PC-3 (cell line): ENCODE measurements at regions of chr5 and their contacts with region 1.

Region 1: DNA sequence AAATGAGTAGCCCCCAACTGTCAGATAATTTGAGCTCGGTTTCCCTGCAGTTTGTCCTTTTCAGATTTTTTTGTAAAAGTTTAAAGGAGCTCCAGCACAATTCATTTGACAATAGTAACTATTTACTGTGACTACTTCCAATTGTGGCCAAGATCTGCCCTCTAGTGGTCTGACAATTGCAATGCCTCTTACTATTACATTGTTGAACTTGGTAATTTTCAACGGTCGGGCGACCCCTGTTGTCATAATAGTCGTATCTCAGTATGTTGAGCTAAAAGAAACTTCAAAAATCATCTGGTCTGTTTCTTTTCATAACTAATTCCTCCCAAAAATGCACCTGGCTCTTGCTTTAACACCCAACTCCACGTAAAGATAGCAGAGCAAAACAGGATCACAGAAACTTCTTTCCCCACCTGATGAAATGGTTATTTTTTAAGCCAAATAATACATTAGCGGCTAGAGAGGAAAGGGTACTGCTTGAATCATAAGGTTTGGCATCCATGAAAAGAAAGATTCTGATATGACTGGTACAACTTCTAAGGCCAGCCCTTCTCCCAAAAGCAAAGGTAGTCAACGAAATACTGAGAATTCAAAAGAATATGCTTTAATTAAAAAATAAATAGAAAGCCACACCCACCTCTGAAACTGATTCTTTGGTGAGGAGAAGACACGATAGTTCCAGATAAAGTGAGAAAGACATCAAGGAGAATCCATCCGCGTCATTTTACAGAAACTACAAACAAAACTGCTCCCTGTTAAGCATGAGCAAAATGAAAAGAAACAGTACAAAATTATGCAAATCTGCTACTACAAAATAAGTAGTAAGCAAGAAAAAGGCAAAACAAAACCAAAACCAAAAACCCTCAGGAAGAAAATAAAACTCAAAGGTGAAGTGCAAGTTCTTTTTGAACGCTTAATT is 76.9 kb upstream of the HTR4 start:
- DNase-seq: peak; percentile 98
- ATAC-seq: peak; percentile 78
- H3K4me3 ChIP-seq: peak overlapping the region; percentile 65
- H3K27ac ChIP-seq: no peak overlapping the region
- H3K4me1 ChIP-seq: peaks cover 54% of the 10 kb centered on the region
- H3K27me3 ChIP-seq: no peaks in the 10 kb centered on the region
- CTCF ChIP-seq: peak; percentile 100

Region 2: GRCh38 chr5:147586832-147587231 is 1144.4 kb before region 1 on chr5:
- CTCF ChIA-PET with region 1: no interaction called
- POLR2A ChIA-PET with region 1: no interaction called
- intact Hi-C with region 1: no loop called
- DNase-seq: no peak
- ATAC-seq: no peak
- H3K4me3 ChIP-seq: no peak overlapping the region
- H3K27ac ChIP-seq: no peak overlapping the region
- H3K4me1 ChIP-seq: no peaks in the 10 kb centered on the region
- H3K27me3 ChIP-seq: 0 out of 2 replicates have a peak, but pooled peaks cover 7% of the 10 kb centered on the region
- CTCF ChIP-seq: no peak

Region 3: GRCh38 chr5:148443998-148444397 is 287.2 kb before region 1 on chr5:
- CTCF ChIA-PET with region 1: interaction called, 57 read pairs
- POLR2A ChIA-PET with region 1: interaction called, 4 read pairs
- intact Hi-C with region 1: loop called (anchors 1 kb)
- DNase-seq: peak; percentile 91
- ATAC-seq: peak; percentile 93
- H3K4me3 ChIP-seq: no peak overlapping the region
- H3K27ac ChIP-seq: no peak overlapping the region
- H3K4me1 ChIP-seq: no peaks in the 10 kb centered on the region
- H3K27me3 ChIP-seq: no peaks in the 10 kb centered on the region
- CTCF ChIP-seq: peak; percentile 97

Region 4: GRCh38 chr5:148523139-148523538 is 208.1 kb before region 1 on chr5:
- CTCF ChIA-PET with region 1: interaction called, 8 read pairs
- POLR2A ChIA-PET with region 1: no interaction called
- intact Hi-C with region 1: loop called (anchors 1 kb)
- DNase-seq: peak; percentile 44
- ATAC-seq: peak; percentile 86
- H3K4me3 ChIP-seq: no peak overlapping the region
- H3K27ac ChIP-seq: no peak overlapping the region
- H3K4me1 ChIP-seq: no peaks in the 10 kb centered on the region
- H3K27me3 ChIP-seq: peaks cover 83% of the 10 kb centered on the region
- CTCF ChIP-seq: peak; percentile 59

Region 5: GRCh38 chr5:148826053-148826738 is 95.0 kb after region 1 on chr5 and contains the start of gene ADRB2:
- CTCF ChIA-PET with region 1: interaction called, 20 read pairs
- POLR2A ChIA-PET with region 1: interaction called, 3 read pairs
- intact Hi-C with region 1: no loop called
- DNase-seq: peak; percentile 100
- ATAC-seq: peak; percentile 83
- H3K4me3 ChIP-seq: peak within 1 kb of the TSS; percentile 73
- H3K27ac ChIP-seq: peak within 1 kb of the TSS; percentile 69
- H3K4me1 ChIP-seq: peaks cover 51% of the 10 kb centered on the region
- H3K27me3 ChIP-seq: no peaks in the 10 kb centered on the region
- CTCF ChIP-seq: no peak
- total RNA-seq, gene ADRB2: 41.1 and 42.1 TPM in 2 replicates

Region 6: DNA sequence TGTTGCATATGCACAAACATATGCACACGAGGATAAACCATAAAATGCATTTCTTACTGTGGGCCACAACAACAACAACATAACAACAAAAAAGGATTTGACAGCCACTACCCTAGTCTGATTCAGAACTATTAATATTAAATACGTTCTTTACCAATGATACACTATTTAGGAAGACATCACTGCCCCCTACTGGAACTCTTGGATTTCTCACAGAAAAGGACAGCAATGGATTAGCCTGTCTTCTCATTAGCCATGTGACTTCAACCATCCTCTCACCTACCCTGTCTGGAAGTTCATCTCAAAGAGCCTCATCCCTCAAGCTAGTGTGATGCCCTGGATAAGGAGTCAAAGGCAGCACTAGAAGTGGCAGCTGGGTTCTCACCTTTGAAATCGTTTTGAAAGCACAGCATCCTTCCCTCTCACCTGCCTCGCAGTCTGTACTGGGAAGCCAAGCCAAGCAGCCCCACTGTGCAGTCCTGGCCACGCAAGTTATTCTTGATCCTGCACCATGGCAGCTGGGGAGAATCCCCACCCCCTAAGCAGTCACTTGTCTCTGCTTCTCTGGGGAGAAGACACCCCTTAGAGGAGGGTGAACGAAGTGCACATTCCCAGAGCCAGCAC is 267.1 kb after region 1 on chr5:
- CTCF ChIA-PET with region 1: interaction called, 17 read pairs
- POLR2A ChIA-PET with region 1: no interaction called
- intact Hi-C with region 1: loop called (anchors 1 kb)
- DNase-seq: peak; percentile 99
- ATAC-seq: peak; percentile 27
- H3K4me3 ChIP-seq: no peak overlapping the region
- H3K27ac ChIP-seq: no peak overlapping the region
- H3K4me1 ChIP-seq: peaks cover 73% of the 10 kb centered on the region
- H3K27me3 ChIP-seq: no peaks in the 10 kb centered on the region
- CTCF ChIP-seq: peak; percentile 99

Region 7: DNA sequence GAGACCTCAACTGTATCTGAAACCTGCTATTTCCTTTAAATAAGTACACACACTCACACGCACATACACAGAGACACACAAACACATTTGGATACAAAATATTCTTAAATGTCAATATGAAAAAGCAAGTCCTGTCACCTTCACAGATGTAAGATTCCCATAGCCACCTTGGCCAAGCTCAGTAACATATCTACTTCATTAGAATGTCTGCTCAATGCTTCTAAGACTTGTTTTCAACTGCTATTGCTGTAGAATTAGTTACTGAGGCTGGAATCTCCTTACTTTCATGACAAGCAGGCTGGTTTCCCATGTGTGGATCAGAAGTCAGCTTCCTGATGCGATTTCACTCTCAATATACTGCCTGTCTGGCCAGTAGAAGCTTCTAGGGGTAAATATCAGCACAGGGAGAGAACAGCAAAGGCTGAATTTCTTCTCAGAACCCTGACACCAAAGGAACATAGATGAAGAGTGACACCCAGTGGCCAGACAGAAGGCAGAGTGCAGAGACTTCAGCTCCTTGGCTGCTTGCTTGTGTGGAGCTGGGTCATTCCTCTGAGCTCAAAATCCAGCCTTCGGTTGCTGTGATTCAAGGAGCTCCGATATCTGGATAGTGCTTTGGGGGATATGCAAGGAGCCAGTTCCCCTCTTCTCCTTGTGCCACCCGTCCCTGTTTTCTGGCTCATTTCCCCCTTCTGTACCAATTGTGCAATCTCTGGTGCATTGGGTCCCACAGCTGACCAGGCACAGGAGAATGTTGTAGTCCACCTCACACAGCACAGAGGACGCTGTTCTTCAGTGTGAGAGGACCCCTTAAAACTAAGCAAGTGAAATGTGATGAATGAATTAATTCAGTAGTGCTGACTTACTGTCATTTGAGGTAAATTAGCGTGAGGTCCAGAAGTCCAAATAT is 383.5 kb after region 1 on chr5:
- CTCF ChIA-PET with region 1: interaction called, 47 read pairs
- POLR2A ChIA-PET with region 1: no interaction called
- intact Hi-C with region 1: loop called (anchors 1 kb)
- DNase-seq: peak; percentile 99
- ATAC-seq: peak; percentile 91
- H3K4me3 ChIP-seq: peak overlapping the region; percentile 5; the same call in 1 of the 2 replicates
- H3K27ac ChIP-seq: peak overlapping the region; percentile 53
- H3K4me1 ChIP-seq: peaks cover 55% of the 10 kb centered on the region
- H3K27me3 ChIP-seq: no peaks in the 10 kb centered on the region
- CTCF ChIP-seq: peak; percentile 100

Region 8: DNA sequence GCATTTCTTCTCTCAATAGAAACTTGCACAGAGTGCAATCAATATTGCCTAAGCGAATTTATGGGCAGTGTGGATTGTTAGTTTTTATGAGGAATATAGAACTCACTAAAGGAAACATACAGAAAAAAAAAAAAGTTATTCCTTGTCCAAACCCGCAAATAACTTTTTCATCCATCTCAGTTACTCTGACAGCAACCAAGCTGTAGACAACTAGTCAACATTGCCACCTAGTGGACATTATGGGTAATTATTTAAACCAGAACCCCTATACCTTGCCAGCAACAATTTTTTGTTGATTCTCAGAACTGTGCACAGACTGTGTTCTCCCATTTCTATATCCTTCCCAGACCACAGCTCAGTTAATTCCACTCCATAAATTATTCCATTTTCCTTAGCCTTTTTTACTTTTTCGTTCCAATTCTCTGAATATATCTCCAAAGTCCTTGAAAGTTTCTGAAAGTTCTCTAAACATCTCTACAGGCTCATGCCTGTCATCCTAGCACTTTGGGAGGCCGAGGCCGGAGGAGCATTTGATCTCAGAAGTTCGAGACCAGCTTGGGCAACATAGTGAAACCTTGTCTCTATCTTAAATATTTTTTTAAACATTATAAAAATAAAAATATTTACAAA is 537.8 kb after region 1 on chr5:
- CTCF ChIA-PET with region 1: interaction called, 3 read pairs
- POLR2A ChIA-PET with region 1: no interaction called
- intact Hi-C with region 1: loop called (anchors 2 kb)
- DNase-seq: peak; percentile 96
- ATAC-seq: 0 out of 2 replicates have a peak, but pooled peaks have one; percentile 3
- H3K4me3 ChIP-seq: no peak overlapping the region
- H3K27ac ChIP-seq: no peak overlapping the region
- H3K4me1 ChIP-seq: peaks cover 28% of the 10 kb centered on the region
- H3K27me3 ChIP-seq: no peaks in the 10 kb centered on the region
- CTCF ChIP-seq: peak; percentile 99